Activated T-helper 2 cell treated with anti-CD3 and anti-CD28 coated beads, Interferon-gamma antibody, Interleukin-2, Interleukin-4, amounts not matched to agents 10 μg/mL and 5 μg/mL and 100 μg/mL, durations not matched to agents 14 hours and 24 hours and 36 hours (primary cell): ENCODE measurements at regions of chr22 and their contacts with region 1.

Region 1: GRCh38 chr22:19909350-19910179 is 32.0 kb upstream of the COMT start:
- DNase-seq: peak; percentile 69
- H3K4me3 Mint-ChIP-seq: no peak overlapping the region
- H3K27ac Mint-ChIP-seq: no peak overlapping the region
- H3K4me1 Mint-ChIP-seq: peaks cover 7% of the 10 kb centered on the region
- H3K27me3 Mint-ChIP-seq: no peaks in the 10 kb centered on the region

Region 2: DNA sequence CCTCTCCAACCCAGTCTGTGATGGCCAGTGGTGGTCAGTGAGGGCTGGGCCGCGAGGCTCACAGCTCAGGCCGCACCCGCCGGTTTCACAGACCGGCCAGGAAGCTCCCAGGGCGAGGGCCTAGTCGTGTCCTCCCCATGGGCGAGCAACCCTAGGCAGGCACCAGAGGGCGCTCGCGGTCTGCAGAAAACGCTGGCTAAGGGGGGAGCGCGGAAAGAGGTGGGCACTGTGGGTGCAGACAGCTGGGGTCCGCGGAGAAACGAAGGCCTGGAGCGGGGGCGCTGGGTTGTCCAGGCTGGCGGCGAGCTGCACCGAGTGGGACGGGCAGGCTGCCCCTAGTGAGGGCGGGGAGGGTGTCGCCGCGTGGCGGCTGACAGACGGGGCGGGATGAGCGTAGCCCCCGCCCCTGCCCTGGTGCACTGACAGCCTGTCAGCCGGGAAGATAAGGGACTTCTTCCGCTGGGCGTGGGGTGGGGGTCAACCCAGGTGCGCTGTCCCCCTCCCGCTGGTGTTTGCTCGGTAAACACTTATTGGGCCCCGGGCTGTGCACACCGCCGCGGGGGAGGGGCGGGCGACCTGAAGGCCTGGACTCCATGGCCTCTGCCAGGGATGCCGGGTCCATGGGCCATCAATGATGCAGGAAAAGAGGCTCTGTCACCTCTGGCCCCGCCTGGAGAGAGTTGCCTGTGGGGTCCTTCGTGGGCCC is 178.8 kb before region 1 on chr22:
- intact Hi-C with region 1: loop called (anchors 1 kb)
- DNase-seq: peak; percentile 69
- H3K4me3 Mint-ChIP-seq: peak overlapping the region; percentile 68
- H3K27ac Mint-ChIP-seq: no peak overlapping the region
- H3K4me1 Mint-ChIP-seq: no peaks in the 10 kb centered on the region
- H3K27me3 Mint-ChIP-seq: peaks cover 4% of the 10 kb centered on the region